ENCODE measurements at regions of chr1 and their contacts with region 1.

Region 1: DNA sequence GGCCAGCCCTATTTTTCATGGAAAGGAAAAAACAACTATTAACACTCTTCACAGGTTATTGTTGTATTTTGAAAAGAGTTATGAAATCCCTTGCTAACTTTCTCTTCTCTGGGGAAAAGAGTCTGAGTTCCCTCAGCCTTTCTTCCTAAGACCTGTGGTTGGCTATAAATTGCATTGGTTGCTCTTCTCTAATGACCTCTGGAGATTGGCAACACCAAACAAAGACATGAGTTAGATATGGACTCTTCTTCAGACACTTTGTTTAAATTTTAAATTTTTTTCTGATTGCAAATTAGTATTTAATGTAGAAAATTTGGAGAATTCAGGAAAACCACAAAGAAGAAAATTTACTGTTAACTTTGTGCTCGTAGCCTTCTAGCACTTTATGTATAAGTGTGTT is 275.7 kb downstream of the PBX1 start:
- DNase-seq: no peak
- H3K4me3 ChIP-seq: no peak overlapping the region
- H3K27ac ChIP-seq: no peak overlapping the region
- H3K4me1 ChIP-seq: peaks cover 0 to 16% (median 0%) of the 10 kb centered on the region in 4 donors
- H3K27me3 ChIP-seq: no peaks in the 10 kb centered on the region
- CTCF ChIP-seq: no peak
- EP300 ChIP-seq: no peak
- POLR2A ChIP-seq: no peak

Region 2: DNA sequence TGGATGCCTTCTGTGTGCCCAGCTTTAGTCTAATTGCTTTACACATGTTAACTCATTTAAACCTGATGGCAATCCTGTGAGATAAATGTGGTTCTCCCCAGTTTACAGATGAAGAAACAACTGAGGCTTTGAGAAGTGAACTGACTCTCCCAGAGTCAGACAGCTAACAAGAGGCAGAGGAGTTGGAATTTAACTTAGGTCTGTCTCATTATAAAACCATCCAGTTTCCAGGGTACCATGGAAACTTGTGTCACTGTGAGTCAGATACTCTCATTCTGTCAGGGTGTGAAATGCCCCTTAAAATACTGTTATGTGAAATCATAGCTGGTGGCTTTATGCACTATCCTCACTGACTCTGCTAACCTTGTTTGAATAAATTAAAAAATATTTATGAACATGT is 69.1 kb before region 1 on chr1:
- in situ Hi-C with region 1: no loop called
- intact Hi-C with region 1: loop called (anchors 2 kb)
- DNase-seq: no peak
- H3K4me3 ChIP-seq: no peak overlapping the region
- H3K27ac ChIP-seq: peak overlapping the region in 3 of 4 donors; percentile 54 to 80 (median 69)
- H3K4me1 ChIP-seq: peaks cover 23 to 57% (median 29%) of the 10 kb centered on the region in 4 donors
- H3K27me3 ChIP-seq: no peaks in the 10 kb centered on the region
- CTCF ChIP-seq: no peak
- EP300 ChIP-seq: no peak
- POLR2A ChIP-seq: no peak

Region 3: DNA sequence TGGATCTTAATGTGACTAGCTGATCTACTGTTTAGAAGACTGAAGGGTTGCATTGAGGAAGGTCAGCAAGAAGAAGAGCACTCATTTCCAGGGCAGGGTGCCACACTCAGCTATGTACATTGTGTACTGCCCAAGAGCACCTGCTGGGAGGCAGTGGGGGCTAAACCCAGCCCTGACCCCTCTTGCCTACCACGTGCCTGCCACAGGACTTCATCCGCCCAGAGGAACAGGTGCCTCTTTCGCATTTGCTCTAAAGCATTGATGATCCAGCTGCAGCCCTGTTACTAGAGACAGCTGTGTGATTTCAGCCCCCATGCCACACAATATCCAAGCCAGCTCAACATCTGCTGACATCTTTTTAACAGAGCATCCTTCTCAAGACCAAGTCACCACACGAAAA is 180.1 kb after region 1 on chr1:
- in situ Hi-C with region 1: no loop called
- intact Hi-C with region 1: no loop called
- DNase-seq: no peak
- H3K4me3 ChIP-seq: no peak overlapping the region
- H3K27ac ChIP-seq: no peak overlapping the region
- H3K4me1 ChIP-seq: no peaks in the 10 kb centered on the region
- H3K27me3 ChIP-seq: no peaks in the 10 kb centered on the region
- CTCF ChIP-seq: no peak
- EP300 ChIP-seq: no peak
- POLR2A ChIP-seq: no peak